GM23248 (cell line): ENCODE measurements at regions of chr17 and their contacts with region 1.

Region 1: DNA sequence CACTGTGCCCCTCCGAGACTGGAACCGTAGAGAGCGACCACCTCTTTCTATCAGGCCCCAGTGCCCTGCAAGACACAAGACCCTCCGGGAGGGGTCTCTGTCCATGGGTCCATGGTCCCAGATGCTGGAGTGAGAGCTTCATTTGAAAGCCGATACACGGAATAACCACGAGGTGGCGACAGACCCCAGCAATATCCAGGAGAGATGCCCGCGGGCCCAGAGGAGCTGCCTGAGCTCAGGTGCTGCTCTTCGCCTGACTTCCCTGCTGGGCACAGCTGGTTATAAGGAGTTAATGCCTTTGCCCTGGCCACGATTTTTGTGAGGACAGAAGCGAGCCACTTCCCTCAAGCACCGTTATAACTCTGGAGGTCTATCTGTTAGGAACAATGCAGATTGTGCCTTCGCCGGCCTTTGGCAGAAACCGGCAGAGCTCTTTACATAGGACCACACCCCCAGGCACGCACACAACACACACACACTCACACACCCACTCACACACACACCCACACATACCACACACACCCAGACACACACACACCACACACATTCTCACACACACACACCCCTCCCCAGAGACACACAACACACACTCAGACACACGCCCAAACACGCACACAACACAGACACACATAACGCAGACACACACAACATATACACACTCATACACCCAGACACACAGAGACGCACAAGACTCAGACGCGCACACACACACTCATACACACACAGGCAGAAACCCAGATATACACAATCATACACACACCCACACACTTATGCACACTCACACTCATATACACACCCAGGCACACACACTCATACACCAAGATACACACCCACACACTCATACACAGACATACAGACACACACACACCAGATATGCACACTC is 436.4 kb downstream of the SOX9 start:
- DNase-seq: peak; percentile 80
- H3K4me3 ChIP-seq: no peak overlapping the region
- H3K27ac ChIP-seq: no peak overlapping the region
- H3K4me1 ChIP-seq: no peaks in the 10 kb centered on the region
- H3K27me3 ChIP-seq: no peaks in the 10 kb centered on the region

Region 2: GRCh38 chr17:71530248-71530647 is 1026.9 kb before region 1 on chr17:
- in situ Hi-C with region 1: no loop called
- DNase-seq: peak; percentile 28
- H3K4me3 ChIP-seq: no peak overlapping the region
- H3K27ac ChIP-seq: no peak overlapping the region
- H3K4me1 ChIP-seq: peaks cover 12% of the 10 kb centered on the region
- H3K27me3 ChIP-seq: no peaks in the 10 kb centered on the region

Region 3: GRCh38 chr17:72421128-72422092 is 135.8 kb before region 1 on chr17:
- in situ Hi-C with region 1: no loop called
- DNase-seq: peak; percentile 98
- H3K4me3 ChIP-seq: no peak overlapping the region
- H3K27ac ChIP-seq: 0 out of 2 replicates have a peak overlapping the region, but pooled peaks have one; percentile 19
- H3K4me1 ChIP-seq: peaks cover 33% of the 10 kb centered on the region
- H3K27me3 ChIP-seq: no peaks in the 10 kb centered on the region

Region 4: GRCh38 chr17:72985881-72986720 is 428.9 kb after region 1 on chr17:
- in situ Hi-C with region 1: loop called (anchors 25 kb)
- DNase-seq: peak; percentile 85
- H3K4me3 ChIP-seq: no peak overlapping the region
- H3K27ac ChIP-seq: no peak overlapping the region
- H3K4me1 ChIP-seq: peaks cover 9% of the 10 kb centered on the region
- H3K27me3 ChIP-seq: no peaks in the 10 kb centered on the region

Region 5: DNA sequence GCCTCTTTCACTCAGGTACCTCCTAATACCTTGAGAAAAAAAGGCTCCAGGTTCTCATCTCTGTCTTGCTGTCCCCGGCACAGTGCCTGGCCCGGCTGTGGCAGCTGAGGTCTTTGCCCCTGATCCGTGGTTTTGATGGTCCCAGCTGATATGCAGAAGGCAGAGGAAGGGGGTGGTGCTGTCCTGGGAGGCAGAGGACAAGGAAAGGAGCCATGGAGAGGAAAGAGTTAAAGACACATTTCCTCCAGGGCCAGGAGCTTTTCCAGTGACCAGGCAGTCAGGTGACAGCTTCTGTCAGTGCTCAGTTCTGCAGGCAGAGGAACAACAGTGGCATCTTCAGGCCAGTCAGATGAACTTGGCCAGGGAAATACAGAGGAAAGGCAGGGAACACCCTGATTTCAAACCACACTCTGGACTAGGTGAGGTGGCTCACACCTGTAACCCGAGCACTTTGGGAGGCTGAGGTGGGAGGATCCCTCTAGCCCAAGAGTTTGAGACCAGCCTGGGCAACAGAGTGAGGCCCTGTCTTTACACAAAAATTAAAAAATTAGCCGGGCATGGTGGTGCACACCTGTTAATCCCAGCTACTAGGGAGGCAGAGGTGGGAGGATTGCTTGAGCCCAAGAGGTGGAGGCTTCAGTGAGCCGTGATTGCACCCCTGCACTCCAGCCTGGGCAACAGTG is 632.4 kb after region 1 on chr17:
- in situ Hi-C with region 1: loop called (anchors 10 kb)
- DNase-seq: peak; percentile 64
- H3K4me3 ChIP-seq: no peak overlapping the region
- H3K27ac ChIP-seq: no peak overlapping the region
- H3K4me1 ChIP-seq: peaks cover 2% of the 10 kb centered on the region
- H3K27me3 ChIP-seq: no peaks in the 10 kb centered on the region